ENCODE measurements at regions of chr10 and their contacts with region 1.

Region 1: GRCh38 chr10:124512600-124512999 is 51.0 kb downstream of the LHPP start:
- DNase-seq: no peak
- H3K4me3 ChIP-seq: no peak overlapping the region
- H3K27ac ChIP-seq: no peak overlapping the region
- H3K4me1 ChIP-seq: no peaks in the 10 kb centered on the region
- H3K27me3 ChIP-seq: no peaks in the 10 kb centered on the region
- CTCF ChIP-seq: no peak

Region 2: DNA sequence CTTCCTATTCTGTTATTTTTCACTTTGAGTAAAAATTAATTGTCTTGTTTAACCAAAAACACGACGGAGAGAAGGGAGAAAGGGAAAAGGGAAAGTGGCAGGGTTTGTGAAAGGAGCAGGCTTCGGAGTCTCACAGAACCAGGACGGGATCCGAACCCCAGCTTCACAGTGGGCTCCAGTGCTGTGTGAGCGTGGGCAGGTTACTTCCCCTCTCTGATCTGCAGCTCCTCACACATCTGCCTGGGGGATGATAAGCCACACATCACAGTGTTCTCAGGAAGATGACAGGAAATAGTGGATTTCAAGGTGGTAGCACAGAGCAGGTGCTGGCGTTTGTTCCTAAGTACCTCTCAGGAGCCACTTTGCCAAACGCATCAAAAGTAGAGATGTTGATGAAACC is 940.6 kb before region 1 on chr10:
- CTCF ChIA-PET with region 1: interaction called, 11 read pairs
- POLR2A ChIA-PET with region 1: no interaction called
- intact Hi-C with region 1: no loop called
- DNase-seq: no peak
- H3K4me3 ChIP-seq: no peak overlapping the region
- H3K27ac ChIP-seq: no peak overlapping the region
- H3K4me1 ChIP-seq: no peaks in the 10 kb centered on the region
- H3K27me3 ChIP-seq: peaks cover 47% of the 10 kb centered on the region
- CTCF ChIP-seq: no peak

Measured in PC-9 (cell line).